ENCODE measurements at regions of chr12 and their contacts with region 1.

Region 1: DNA sequence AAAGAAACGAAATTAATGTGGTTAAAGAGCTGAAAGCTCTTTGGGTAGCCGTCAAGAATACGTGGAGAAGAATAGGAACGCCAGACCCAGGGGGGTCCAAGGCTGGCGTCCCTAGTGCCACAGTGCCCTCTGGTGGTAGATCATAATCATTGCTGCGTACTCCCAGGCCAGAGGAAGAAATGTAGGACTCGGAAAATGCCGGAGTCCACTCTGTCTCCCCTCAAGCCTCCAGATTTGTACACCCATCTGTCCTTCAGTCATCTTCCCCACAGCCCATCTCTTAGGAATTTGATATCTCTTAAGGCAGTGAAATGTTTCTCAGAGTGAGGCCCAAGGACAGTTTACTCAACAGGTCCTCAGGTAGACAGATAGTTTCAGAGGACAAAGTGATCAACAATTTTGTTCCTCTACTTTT is 25.4 kb upstream of the PLEKHG6 start:
- DNase-seq: no peak
- H3K4me3 ChIP-seq: no peak overlapping the region
- H3K27ac ChIP-seq: peak overlapping the region; percentile 52
- H3K27me3 ChIP-seq: no peaks in the 10 kb centered on the region
- CTCF ChIP-seq: peak; percentile 91

Region 2: DNA sequence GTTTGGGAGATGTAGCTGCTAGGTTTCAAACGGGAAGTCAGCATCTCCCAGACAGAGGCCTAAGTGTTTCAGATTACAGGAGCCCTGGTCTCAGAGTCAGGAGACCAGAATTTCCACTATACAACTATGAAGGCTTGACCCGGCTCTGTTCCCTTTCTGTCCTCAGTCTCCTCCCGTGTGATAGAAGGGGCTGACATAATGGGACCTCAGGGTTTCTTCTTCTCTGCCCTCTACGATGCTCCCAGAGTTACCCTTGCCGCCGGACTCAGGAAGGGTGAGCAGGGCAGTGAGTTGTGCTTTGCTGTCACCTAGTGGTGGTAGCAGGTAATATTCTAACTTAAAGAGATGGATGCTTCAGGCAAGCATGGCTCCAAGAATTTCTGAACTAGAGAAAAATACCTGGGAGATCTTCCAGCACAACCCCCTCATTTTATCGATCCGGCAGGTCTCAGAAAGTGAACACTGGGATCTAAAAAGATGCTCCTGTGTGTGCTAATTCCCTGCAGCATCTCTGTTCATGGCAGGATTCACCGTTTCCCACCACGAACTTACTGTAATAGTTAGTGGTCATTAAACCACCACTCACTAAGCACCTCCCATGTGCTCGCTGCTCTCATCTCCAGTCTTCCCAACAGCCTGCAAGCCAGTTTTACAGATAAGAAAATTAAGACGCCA is 245.0 kb before region 1 on chr12:
- CTCF ChIA-PET with region 1: interaction called, 28 read pairs
- POLR2A ChIA-PET with region 1: no interaction called
- DNase-seq: peak; percentile 49
- H3K4me3 ChIP-seq: no peak overlapping the region
- H3K27ac ChIP-seq: no peak overlapping the region
- H3K27me3 ChIP-seq: no peaks in the 10 kb centered on the region
- CTCF ChIP-seq: peak; percentile 97

Region 3: GRCh38 chr12:6053541-6053940 is 231.5 kb before region 1 on chr12:
- CTCF ChIA-PET with region 1: interaction called, 24 read pairs
- POLR2A ChIA-PET with region 1: interaction called, 5 read pairs
- DNase-seq: no peak
- H3K4me3 ChIP-seq: no peak overlapping the region
- H3K27ac ChIP-seq: no peak overlapping the region
- H3K27me3 ChIP-seq: no peaks in the 10 kb centered on the region
- CTCF ChIP-seq: peak; percentile 14; the same call in 1 of the 2 replicates

Region 4: GRCh38 chr12:6062757-6063735 is 222.0 kb before region 1 on chr12:
- CTCF ChIA-PET with region 1: interaction called, 23 read pairs
- POLR2A ChIA-PET with region 1: no interaction called
- DNase-seq: peak; percentile 21
- H3K4me3 ChIP-seq: no peak overlapping the region
- H3K27ac ChIP-seq: no peak overlapping the region
- H3K27me3 ChIP-seq: no peaks in the 10 kb centered on the region
- CTCF ChIP-seq: peak; percentile 99

Region 5: GRCh38 chr12:6215932-6216494 is 69.1 kb before region 1 on chr12:
- CTCF ChIA-PET with region 1: interaction called, 12 read pairs
- POLR2A ChIA-PET with region 1: no interaction called
- DNase-seq: no peak
- H3K4me3 ChIP-seq: no peak overlapping the region
- H3K27ac ChIP-seq: no peak overlapping the region
- H3K27me3 ChIP-seq: no peaks in the 10 kb centered on the region
- CTCF ChIP-seq: no peak

Region 6: GRCh38 chr12:6230321-6231110 is 54.6 kb before region 1 on chr12:
- CTCF ChIA-PET with region 1: interaction called, 11 read pairs
- POLR2A ChIA-PET with region 1: interaction called, 9 read pairs
- DNase-seq: no peak
- H3K4me3 ChIP-seq: peak overlapping the region; percentile 17
- H3K27ac ChIP-seq: peak overlapping the region; percentile 94
- H3K27me3 ChIP-seq: no peaks in the 10 kb centered on the region
- CTCF ChIP-seq: no peak

Region 7: DNA sequence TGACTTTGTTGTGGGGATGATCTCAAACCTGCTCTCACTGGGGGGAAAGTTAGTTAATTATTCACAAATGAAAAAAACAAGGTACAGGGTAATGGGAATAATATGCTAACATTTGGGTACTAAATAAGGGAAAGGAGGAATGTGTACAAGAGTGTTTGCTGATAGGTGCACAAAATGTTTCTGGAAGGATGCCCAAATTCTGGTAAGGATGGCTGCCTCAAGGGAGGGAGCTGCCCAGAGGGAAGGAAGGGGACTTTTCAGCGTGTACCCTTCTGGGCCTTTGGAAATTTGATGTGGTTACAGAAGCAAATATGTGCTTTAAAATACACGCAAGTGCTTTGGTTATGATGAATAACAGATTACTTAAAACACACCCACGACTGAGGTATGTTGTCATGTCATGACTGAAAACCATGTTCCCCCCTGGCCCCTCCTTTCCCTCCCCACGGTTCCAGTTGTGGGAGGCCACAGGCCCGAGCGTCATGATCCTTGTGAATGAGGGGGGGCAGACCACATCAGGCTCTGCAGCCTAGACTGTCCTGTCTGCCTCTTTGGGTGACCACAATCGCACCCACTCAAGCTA is 17.8 kb before region 1 on chr12:
- CTCF ChIA-PET with region 1: interaction called, 10 read pairs
- POLR2A ChIA-PET with region 1: no interaction called
- DNase-seq: no peak
- H3K4me3 ChIP-seq: no peak overlapping the region
- H3K27ac ChIP-seq: no peak overlapping the region
- H3K27me3 ChIP-seq: peaks cover 2% of the 10 kb centered on the region
- CTCF ChIP-seq: no peak

Region 8: GRCh38 chr12:6383572-6384498 is 98.8 kb after region 1 on chr12 and contains the start of gene LTBR:
- CTCF ChIA-PET with region 1: no interaction called
- POLR2A ChIA-PET with region 1: no interaction called
- DNase-seq: peak; percentile 76
- H3K4me3 ChIP-seq: peak within 1 kb of the TSS; percentile 72
- H3K27ac ChIP-seq: peak within 1 kb of the TSS; percentile 94
- H3K27me3 ChIP-seq: no peaks in the 10 kb centered on the region
- CTCF ChIP-seq: 0 out of 2 replicates have a peak, but pooled peaks have one; percentile 12
- polyA plus RNA-seq, gene LTBR: 32.1 and 38.8 TPM in 2 replicates

Region 9: GRCh38 chr12:6423267-6424007 is 138.4 kb after region 1 on chr12:
- CTCF ChIA-PET with region 1: no interaction called
- POLR2A ChIA-PET with region 1: no interaction called
- DNase-seq: peak; percentile 83
- H3K4me3 ChIP-seq: no peak overlapping the region
- H3K27ac ChIP-seq: no peak overlapping the region
- H3K27me3 ChIP-seq: no peaks in the 10 kb centered on the region
- CTCF ChIP-seq: peak; percentile 87

Measured in AG04450 (cell line).